ENCODE measurements at regions of chr2 and their contacts with region 1.

Region 1: DNA sequence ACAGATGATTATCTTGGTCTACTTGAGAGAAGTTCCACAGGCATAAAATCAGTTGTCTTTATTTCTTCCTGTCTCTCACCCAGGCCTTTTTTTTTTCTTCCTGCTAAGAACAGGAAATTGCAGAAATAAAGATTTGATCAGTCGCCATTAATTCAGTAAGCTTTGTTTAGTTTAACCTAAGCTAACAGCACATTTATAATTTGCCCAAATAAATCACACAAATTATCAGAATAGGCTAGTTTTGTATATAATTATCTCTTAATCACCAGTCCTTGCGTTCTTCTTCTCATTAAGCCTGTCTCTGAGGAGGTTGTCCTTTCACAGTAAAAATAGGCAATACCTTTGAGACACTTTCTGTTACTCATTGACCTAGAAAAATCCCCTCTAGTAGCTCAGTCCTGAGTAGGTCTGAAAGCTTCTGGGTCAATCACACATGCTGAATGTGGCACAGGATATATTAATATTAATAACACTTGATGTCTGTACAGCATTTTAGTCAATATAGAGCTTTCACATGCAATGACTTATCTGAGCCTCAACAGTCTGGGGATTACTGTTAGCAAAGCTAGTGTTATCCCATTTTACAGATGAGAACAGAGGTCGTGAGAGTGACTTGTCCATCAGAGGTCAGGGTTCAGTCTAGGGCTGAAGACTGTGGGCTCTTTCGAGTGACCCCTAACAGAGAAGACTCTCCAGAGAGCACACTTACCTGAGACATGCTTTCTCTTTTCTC is 11.2 kb upstream of the STK17B start:
- DNase-seq: peak in 1 of 5 donors; percentile 53
- H3K4me3 ChIP-seq: peak overlapping the region; percentile 2 to 7
- H3K4me3 Mint-ChIP-seq: peak overlapping the region; percentile 64 to 85 (median 74)
- H3K27ac ChIP-seq: peak overlapping the region; percentile 55
- H3K27ac Mint-ChIP-seq: peak overlapping the region; percentile 91 to 98 (median 95)
- H3K4me1 ChIP-seq: peaks cover 92% of the 10 kb centered on the region
- H3K4me1 Mint-ChIP-seq: peaks cover 65 to 93% (median 80%) of the 10 kb centered on the region in 4 donors
- H3K27me3 ChIP-seq: no peaks in the 10 kb centered on the region
- H3K27me3 Mint-ChIP-seq: no peaks in the 10 kb centered on the region

Region 2: GRCh38 chr2:196112408-196113034 is 70.1 kb before region 1 on chr2:
- CTCF ChIA-PET with region 1: no interaction called
- POLR2A ChIA-PET with region 1: no interaction called
- intact Hi-C with region 1: no loop called
- DNase-seq: no peak
- H3K4me3 ChIP-seq: no peak overlapping the region
- H3K4me3 Mint-ChIP-seq: no peak overlapping the region
- H3K27ac ChIP-seq: no peak overlapping the region
- H3K27ac Mint-ChIP-seq: no peak overlapping the region
- H3K4me1 ChIP-seq: peaks cover 22% of the 10 kb centered on the region
- H3K4me1 Mint-ChIP-seq: peaks cover 16 to 28% (median 21%) of the 10 kb centered on the region in 4 donors
- H3K27me3 ChIP-seq: no peaks in the 10 kb centered on the region
- H3K27me3 Mint-ChIP-seq: no peaks in the 10 kb centered on the region

Region 3: DNA sequence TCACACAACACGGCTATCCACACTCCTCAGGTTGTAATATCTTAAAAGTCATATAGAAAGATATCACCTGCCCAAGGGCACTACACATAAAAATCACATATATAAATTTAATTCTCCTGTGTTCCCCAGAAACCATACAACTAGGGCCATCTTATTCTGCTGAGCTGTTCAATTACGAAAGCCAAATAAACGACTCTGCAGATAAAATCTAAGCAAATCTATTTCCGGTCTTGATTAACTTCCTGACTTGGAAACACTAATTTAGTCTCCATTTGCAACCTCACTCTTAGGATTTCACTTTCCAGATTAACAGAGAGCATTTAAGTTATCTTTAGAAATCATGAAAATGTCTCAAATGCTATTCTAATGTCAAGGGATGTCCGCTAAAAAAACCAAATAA is 12.7 kb after region 1 on chr2:
- CTCF ChIA-PET with region 1: interaction called, 26 read pairs
- POLR2A ChIA-PET with region 1: interaction called, 77 read pairs
- intact Hi-C with region 1: no loop called
- DNase-seq: no peak
- H3K4me3 ChIP-seq: peak overlapping the region in 1 of 2 donors; percentile 34
- H3K4me3 Mint-ChIP-seq: peak overlapping the region; percentile 29 to 83 (median 74)
- H3K27ac ChIP-seq: no peak overlapping the region
- H3K27ac Mint-ChIP-seq: peak overlapping the region; percentile 23 to 91 (median 61)
- H3K4me1 ChIP-seq: peaks cover 61% of the 10 kb centered on the region
- H3K4me1 Mint-ChIP-seq: peaks cover 32 to 76% (median 53%) of the 10 kb centered on the region in 4 donors
- H3K27me3 ChIP-seq: no peaks in the 10 kb centered on the region
- H3K27me3 Mint-ChIP-seq: no peaks in the 10 kb centered on the region

Region 4: DNA sequence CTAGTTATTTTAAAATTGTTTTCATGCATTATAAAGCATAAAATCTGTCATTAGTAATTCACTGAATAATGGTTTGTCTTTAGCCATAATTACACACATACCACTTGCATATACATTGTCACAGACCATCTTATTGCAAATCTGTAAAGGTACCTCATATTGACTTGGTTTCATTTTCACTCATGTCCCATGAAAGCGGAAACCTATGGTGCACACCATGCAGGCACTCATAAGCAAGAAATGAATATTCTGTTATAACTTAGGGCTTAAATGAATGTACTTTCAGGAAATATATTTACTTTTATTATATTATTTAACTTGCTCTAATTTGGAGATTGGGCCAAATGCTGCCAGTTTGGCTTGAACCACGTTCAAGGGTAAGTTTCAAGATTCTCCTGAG is 18.0 kb after region 1 on chr2:
- CTCF ChIA-PET with region 1: interaction called, 26 read pairs
- POLR2A ChIA-PET with region 1: interaction called, 77 read pairs
- intact Hi-C with region 1: no loop called
- DNase-seq: peak; percentile 45 to 55 (median 50)
- H3K4me3 ChIP-seq: peak overlapping the region; percentile 43 to 57
- H3K4me3 Mint-ChIP-seq: peak overlapping the region; percentile 74 to 92 (median 80)
- H3K27ac ChIP-seq: peak overlapping the region; percentile 70
- H3K27ac Mint-ChIP-seq: peak overlapping the region; percentile 72 to 98 (median 95)
- H3K4me1 ChIP-seq: peaks cover 63% of the 10 kb centered on the region
- H3K4me1 Mint-ChIP-seq: peaks cover 37 to 58% (median 44%) of the 10 kb centered on the region in 4 donors
- H3K27me3 ChIP-seq: no peaks in the 10 kb centered on the region
- H3K27me3 Mint-ChIP-seq: no peaks in the 10 kb centered on the region

Region 5: GRCh38 chr2:196205881-196206435 is 23.4 kb after region 1 on chr2:
- CTCF ChIA-PET with region 1: interaction called, 26 read pairs
- POLR2A ChIA-PET with region 1: interaction called, 88 read pairs
- intact Hi-C with region 1: loop called (anchors 1 kb)
- DNase-seq: no peak
- H3K4me3 ChIP-seq: no peak overlapping the region
- H3K4me3 Mint-ChIP-seq: no peak overlapping the region
- H3K27ac ChIP-seq: no peak overlapping the region
- H3K27ac Mint-ChIP-seq: peak overlapping the region in 3 of 7 donors; percentile 14 to 85 (median 24)
- H3K4me1 ChIP-seq: peaks cover 53% of the 10 kb centered on the region
- H3K4me1 Mint-ChIP-seq: peaks cover 46 to 55% (median 49%) of the 10 kb centered on the region in 4 donors
- H3K27me3 ChIP-seq: no peaks in the 10 kb centered on the region
- H3K27me3 Mint-ChIP-seq: no peaks in the 10 kb centered on the region

Measured in CD4-positive, alpha-beta memory T cell (primary cell).